ENCODE measurements at regions of chr2 and their contacts with region 1.

Region 1: GRCh38 chr2:208040199-208041171 is 15.2 kb upstream of the PLEKHM3 start:
- DNase-seq: peak; percentile 29 to 69 (median 65)
- ATAC-seq: peak; percentile 70
- H3K4me3 ChIP-seq: no peak overlapping the region
- H3K4me3 Mint-ChIP-seq: no peak overlapping the region
- H3K27ac ChIP-seq: no peak overlapping the region
- H3K27ac Mint-ChIP-seq: no peak overlapping the region
- H3K4me1 ChIP-seq: no peaks in the 10 kb centered on the region
- H3K4me1 Mint-ChIP-seq: no peaks in the 10 kb centered on the region
- H3K27me3 ChIP-seq: no peaks in the 10 kb centered on the region
- H3K27me3 Mint-ChIP-seq: no peaks in the 10 kb centered on the region
- CTCF ChIP-seq: peak; percentile 56

Region 2: GRCh38 chr2:206765242-206766056 is 1275.0 kb before region 1 on chr2 and contains the starts of genes FASTKD2 and MDH1B:
- CTCF ChIA-PET with region 1: no interaction called
- POLR2A ChIA-PET with region 1: no interaction called
- intact Hi-C with region 1: no loop called
- DNase-seq: peak; percentile 64 to 94 (median 81)
- ATAC-seq: peak; percentile 87
- H3K4me3 ChIP-seq: peak within 1 kb of the TSS; percentile 62 to 94
- H3K4me3 Mint-ChIP-seq: peak within 1 kb of the TSS; percentile 94
- H3K27ac ChIP-seq: peak within 1 kb of the TSS; percentile 93 to 97
- H3K27ac Mint-ChIP-seq: peak within 1 kb of the TSS; percentile 98
- H3K4me1 ChIP-seq: peaks cover 40% of the 10 kb centered on the region
- H3K4me1 Mint-ChIP-seq: peaks cover 41% of the 10 kb centered on the region
- H3K27me3 ChIP-seq: no peaks in the 10 kb centered on the region
- H3K27me3 Mint-ChIP-seq: no peaks in the 10 kb centered on the region
- CTCF ChIP-seq: no peak
- total RNA-seq, gene FASTKD2: 31.3 to 33.8 TPM
- total RNA-seq, gene MDH1B: 0.19 to 0.33 TPM

Region 3: GRCh38 chr2:207692206-207693065 is 348.0 kb before region 1 on chr2:
- CTCF ChIA-PET with region 1: interaction called, 7 read pairs
- POLR2A ChIA-PET with region 1: no interaction called
- intact Hi-C with region 1: loop called in 1 of 2 experiments (anchors 2 kb)
- DNase-seq: peak in 8 of 9 experiments; percentile 27 to 71 (median 54)
- ATAC-seq: peak; percentile 52
- H3K4me3 ChIP-seq: no peak overlapping the region
- H3K4me3 Mint-ChIP-seq: no peak overlapping the region
- H3K27ac ChIP-seq: no peak overlapping the region
- H3K27ac Mint-ChIP-seq: no peak overlapping the region
- H3K4me1 ChIP-seq: no peaks in the 10 kb centered on the region
- H3K4me1 Mint-ChIP-seq: peaks cover 3% of the 10 kb centered on the region
- H3K27me3 ChIP-seq: no peaks in the 10 kb centered on the region
- H3K27me3 Mint-ChIP-seq: peaks cover 3% of the 10 kb centered on the region
- CTCF ChIP-seq: peak; percentile 54

Region 4: GRCh38 chr2:207746131-207746530 is 294.4 kb before region 1 on chr2:
- CTCF ChIA-PET with region 1: interaction called, 19 read pairs
- POLR2A ChIA-PET with region 1: no interaction called
- intact Hi-C with region 1: loop called (anchors 1 kb)
- DNase-seq: peak in 6 of 9 experiments; percentile 9 to 67 (median 42)
- ATAC-seq: peak; percentile 67
- H3K4me3 ChIP-seq: no peak overlapping the region
- H3K4me3 Mint-ChIP-seq: no peak overlapping the region
- H3K27ac ChIP-seq: no peak overlapping the region
- H3K27ac Mint-ChIP-seq: no peak overlapping the region
- H3K4me1 ChIP-seq: no peaks in the 10 kb centered on the region
- H3K4me1 Mint-ChIP-seq: no peaks in the 10 kb centered on the region
- H3K27me3 ChIP-seq: no peaks in the 10 kb centered on the region
- H3K27me3 Mint-ChIP-seq: no peaks in the 10 kb centered on the region
- CTCF ChIP-seq: peak; percentile 70

Region 5: GRCh38 chr2:207892716-207893402 is 147.6 kb before region 1 on chr2:
- CTCF ChIA-PET with region 1: no interaction called
- POLR2A ChIA-PET with region 1: no interaction called
- intact Hi-C with region 1: no loop called
- DNase-seq: no peak
- ATAC-seq: no peak
- H3K4me3 ChIP-seq: no peak overlapping the region
- H3K4me3 Mint-ChIP-seq: no peak overlapping the region
- H3K27ac ChIP-seq: no peak overlapping the region
- H3K27ac Mint-ChIP-seq: no peak overlapping the region
- H3K4me1 ChIP-seq: no peaks in the 10 kb centered on the region
- H3K4me1 Mint-ChIP-seq: no peaks in the 10 kb centered on the region
- H3K27me3 ChIP-seq: no peaks in the 10 kb centered on the region
- H3K27me3 Mint-ChIP-seq: no peaks in the 10 kb centered on the region
- CTCF ChIP-seq: no peak

Region 6: GRCh38 chr2:207974216-207974605 is 66.3 kb before region 1 on chr2:
- CTCF ChIA-PET with region 1: interaction called, 12 read pairs
- POLR2A ChIA-PET with region 1: no interaction called
- intact Hi-C with region 1: no loop called
- DNase-seq: no peak
- ATAC-seq: no peak
- H3K4me3 ChIP-seq: no peak overlapping the region
- H3K4me3 Mint-ChIP-seq: no peak overlapping the region
- H3K27ac ChIP-seq: no peak overlapping the region
- H3K27ac Mint-ChIP-seq: no peak overlapping the region
- H3K4me1 ChIP-seq: peaks cover 4% of the 10 kb centered on the region
- H3K4me1 Mint-ChIP-seq: peaks cover 26% of the 10 kb centered on the region
- H3K27me3 ChIP-seq: no peaks in the 10 kb centered on the region
- H3K27me3 Mint-ChIP-seq: no peaks in the 10 kb centered on the region
- CTCF ChIP-seq: no peak

Region 7: GRCh38 chr2:208025037-208025813 is 15.3 kb before region 1 on chr2 and contains the start of gene PLEKHM3:
- CTCF ChIA-PET with region 1: interaction called, 12 read pairs
- POLR2A ChIA-PET with region 1: no interaction called
- intact Hi-C with region 1: no loop called
- DNase-seq: peak; percentile 53 to 90 (median 71)
- ATAC-seq: peak; percentile 76
- H3K4me3 ChIP-seq: peak within 1 kb of the TSS; percentile 79 to 80
- H3K4me3 Mint-ChIP-seq: peak within 1 kb of the TSS; percentile 98
- H3K27ac ChIP-seq: peak within 1 kb of the TSS; percentile 64 to 67
- H3K27ac Mint-ChIP-seq: peak within 1 kb of the TSS; percentile 95
- H3K4me1 ChIP-seq: peaks cover 6% of the 10 kb centered on the region
- H3K4me1 Mint-ChIP-seq: peaks cover 30% of the 10 kb centered on the region
- H3K27me3 ChIP-seq: no peaks in the 10 kb centered on the region
- H3K27me3 Mint-ChIP-seq: no peaks in the 10 kb centered on the region
- CTCF ChIP-seq: no peak
- total RNA-seq, gene PLEKHM3: 10.9 to 11.3 TPM